ENCODE measurements at regions of chr2 and their contacts with region 1.

Region 1: GRCh38 chr2:163735685-163736432 is at the start of gene FIGN:
- DNase-seq: no peak
- ATAC-seq: peak; percentile 75
- H3K4me3 ChIP-seq: peak within 1 kb of the TSS; percentile 88 to 98
- H3K27ac ChIP-seq: peak within 1 kb of the TSS; percentile 99
- H3K4me1 ChIP-seq: peaks cover 26% of the 10 kb centered on the region
- H3K27me3 ChIP-seq: no peaks in the 10 kb centered on the region
- CTCF ChIP-seq: no peak
- total RNA-seq, gene FIGN: 19.5 TPM

Region 2: DNA sequence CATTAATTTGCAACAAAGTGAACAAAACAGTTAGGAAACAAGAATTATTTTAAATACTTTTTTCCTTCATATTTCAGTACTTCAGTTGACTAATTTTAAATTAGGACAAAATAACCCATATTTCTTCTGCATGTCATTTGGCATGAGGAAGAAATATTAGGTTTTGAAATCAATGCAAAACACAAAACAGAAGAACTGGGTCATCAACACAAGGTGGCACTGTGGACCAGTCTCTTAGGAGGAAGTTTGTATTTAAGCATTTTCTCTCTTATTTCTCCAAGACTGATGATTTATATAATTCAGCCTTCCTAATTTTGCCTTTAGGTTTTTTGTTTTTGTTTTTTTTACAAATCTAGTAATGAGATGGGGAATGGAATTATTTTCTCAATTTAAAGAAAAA is 544.5 kb before region 1 on chr2:
- CTCF ChIA-PET with region 1: no interaction called
- POLR2A ChIA-PET with region 1: interaction called, 3 read pairs
- in situ Hi-C with region 1: no loop called
- intact Hi-C with region 1: loop called (anchors 5 kb)
- DNase-seq: no peak
- ATAC-seq: no peak
- H3K4me3 ChIP-seq: no peak overlapping the region
- H3K27ac ChIP-seq: no peak overlapping the region; the same call in 1 of the 2 replicates
- H3K4me1 ChIP-seq: peaks cover 3% of the 10 kb centered on the region; the same call in 1 of the 2 replicates
- H3K27me3 ChIP-seq: no peaks in the 10 kb centered on the region
- CTCF ChIP-seq: peak; percentile 72; the same call in 1 of the 2 replicates

Region 3: GRCh38 chr2:163345908-163346573 is 389.8 kb before region 1 on chr2:
- CTCF ChIA-PET with region 1: no interaction called
- POLR2A ChIA-PET with region 1: interaction called, 14 read pairs
- in situ Hi-C with region 1: no loop called
- intact Hi-C with region 1: loop called (anchors 2 kb)
- DNase-seq: peak; percentile 81
- ATAC-seq: no peak
- H3K4me3 ChIP-seq: no peak overlapping the region
- H3K27ac ChIP-seq: peak overlapping the region; percentile 100
- H3K4me1 ChIP-seq: peaks cover 36% of the 10 kb centered on the region
- H3K27me3 ChIP-seq: no peaks in the 10 kb centered on the region
- CTCF ChIP-seq: peak; percentile 76; the same call in 1 of the 2 replicates

Region 4: DNA sequence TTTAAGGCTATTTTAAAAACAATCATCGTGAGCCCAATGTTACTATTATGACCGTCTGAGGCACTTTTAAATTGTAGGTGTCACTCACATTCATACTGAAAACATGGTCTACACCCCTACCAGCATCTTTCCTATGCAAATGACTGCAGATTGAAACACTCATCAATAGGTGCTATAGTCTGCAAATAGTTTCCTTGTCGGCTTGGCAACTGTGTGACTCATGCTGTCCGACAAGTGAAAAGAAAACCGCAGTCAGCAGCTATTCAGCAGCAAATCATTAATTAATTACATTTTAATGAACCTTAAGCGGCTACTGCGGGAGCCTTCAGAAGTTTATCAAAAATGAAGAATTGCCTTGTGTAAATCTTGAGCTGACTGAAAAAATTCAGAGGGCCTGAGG is 134.5 kb before region 1 on chr2:
- CTCF ChIA-PET with region 1: no interaction called
- POLR2A ChIA-PET with region 1: no interaction called
- in situ Hi-C with region 1: no loop called
- intact Hi-C with region 1: loop called (anchors 10 kb)
- DNase-seq: no peak
- ATAC-seq: peak; percentile 79; the same call in 1 of the 2 replicates
- H3K4me3 ChIP-seq: no peak overlapping the region
- H3K27ac ChIP-seq: peak overlapping the region; percentile 87
- H3K4me1 ChIP-seq: peaks cover 63% of the 10 kb centered on the region
- H3K27me3 ChIP-seq: no peaks in the 10 kb centered on the region
- CTCF ChIP-seq: no peak

Region 5: GRCh38 chr2:163686289-163686688 is 49.6 kb before region 1 on chr2:
- CTCF ChIA-PET with region 1: no interaction called
- POLR2A ChIA-PET with region 1: no interaction called
- in situ Hi-C with region 1: no loop called
- intact Hi-C with region 1: loop called (anchors 1 kb)
- DNase-seq: no peak
- ATAC-seq: no peak
- H3K4me3 ChIP-seq: no peak overlapping the region
- H3K27ac ChIP-seq: no peak overlapping the region
- H3K4me1 ChIP-seq: peaks cover 13% of the 10 kb centered on the region
- H3K27me3 ChIP-seq: no peaks in the 10 kb centered on the region
- CTCF ChIP-seq: no peak

Region 6: DNA sequence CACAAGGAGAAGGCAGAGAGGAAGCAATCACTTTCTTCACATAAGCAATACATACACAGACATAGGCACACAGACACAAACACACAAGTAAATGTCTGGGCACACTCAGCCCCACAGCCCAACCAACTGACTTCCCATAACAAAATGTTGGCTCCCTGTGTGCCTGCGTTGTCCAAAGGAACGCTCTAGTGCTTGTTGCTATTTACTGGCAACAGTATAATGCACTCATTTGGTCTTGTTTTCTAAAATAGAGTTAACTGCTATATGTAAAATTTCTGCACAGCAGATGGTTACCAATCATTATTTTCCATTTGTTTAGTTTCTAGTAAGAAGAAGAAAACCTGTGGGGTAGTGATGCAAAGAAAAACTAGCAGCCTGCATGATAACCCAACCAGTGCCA is 16.5 kb before region 1 on chr2:
- CTCF ChIA-PET with region 1: no interaction called
- POLR2A ChIA-PET with region 1: no interaction called
- in situ Hi-C with region 1: no loop called
- intact Hi-C with region 1: no loop called
- DNase-seq: no peak
- ATAC-seq: no peak
- H3K4me3 ChIP-seq: no peak overlapping the region
- H3K27ac ChIP-seq: no peak overlapping the region; the same call in 1 of the 2 replicates
- H3K4me1 ChIP-seq: peaks cover 37% of the 10 kb centered on the region
- H3K27me3 ChIP-seq: no peaks in the 10 kb centered on the region
- CTCF ChIP-seq: no peak

Region 7: DNA sequence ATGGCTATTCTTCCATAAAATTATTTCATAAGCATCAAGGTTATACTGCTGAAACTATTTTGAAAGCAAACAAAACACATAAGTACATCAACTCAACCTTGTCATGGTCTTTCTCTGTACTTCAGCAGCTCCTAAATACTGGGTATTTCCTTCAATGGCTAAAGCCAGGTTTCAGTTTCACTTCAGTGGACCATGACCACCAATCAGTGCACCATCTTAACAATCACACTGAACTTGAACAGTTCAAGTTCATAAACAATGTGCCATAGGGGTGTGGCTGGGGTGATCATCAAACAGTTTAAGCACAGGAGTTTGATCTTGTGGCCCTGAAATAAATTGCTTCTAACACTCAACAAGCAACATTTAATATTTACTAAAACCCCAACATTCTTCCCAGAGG is 124.1 kb after region 1 on chr2:
- CTCF ChIA-PET with region 1: no interaction called
- POLR2A ChIA-PET with region 1: no interaction called
- in situ Hi-C with region 1: no loop called
- intact Hi-C with region 1: no loop called
- DNase-seq: no peak
- ATAC-seq: peak; percentile 72
- H3K4me3 ChIP-seq: peak overlapping the region in 1 of 2 experiments; percentile 17; a peak in 1 of 4 replicates
- H3K27ac ChIP-seq: peak overlapping the region; percentile 57; the same call in 1 of the 2 replicates
- H3K4me1 ChIP-seq: no peaks in the 10 kb centered on the region
- H3K27me3 ChIP-seq: no peaks in the 10 kb centered on the region
- CTCF ChIP-seq: no peak

Region 8: GRCh38 chr2:164061129-164061746 is 325.4 kb after region 1 on chr2:
- CTCF ChIA-PET with region 1: interaction called, 3 read pairs
- POLR2A ChIA-PET with region 1: interaction called, 9 read pairs
- in situ Hi-C with region 1: no loop called
- intact Hi-C with region 1: loop called (anchors 5 kb)
- DNase-seq: peak; percentile 20
- ATAC-seq: no peak
- H3K4me3 ChIP-seq: no peak overlapping the region
- H3K27ac ChIP-seq: peak overlapping the region; percentile 3; the same call in 1 of the 2 replicates
- H3K4me1 ChIP-seq: no peaks in the 10 kb centered on the region
- H3K27me3 ChIP-seq: no peaks in the 10 kb centered on the region
- CTCF ChIP-seq: peak; percentile 65

Region 9: DNA sequence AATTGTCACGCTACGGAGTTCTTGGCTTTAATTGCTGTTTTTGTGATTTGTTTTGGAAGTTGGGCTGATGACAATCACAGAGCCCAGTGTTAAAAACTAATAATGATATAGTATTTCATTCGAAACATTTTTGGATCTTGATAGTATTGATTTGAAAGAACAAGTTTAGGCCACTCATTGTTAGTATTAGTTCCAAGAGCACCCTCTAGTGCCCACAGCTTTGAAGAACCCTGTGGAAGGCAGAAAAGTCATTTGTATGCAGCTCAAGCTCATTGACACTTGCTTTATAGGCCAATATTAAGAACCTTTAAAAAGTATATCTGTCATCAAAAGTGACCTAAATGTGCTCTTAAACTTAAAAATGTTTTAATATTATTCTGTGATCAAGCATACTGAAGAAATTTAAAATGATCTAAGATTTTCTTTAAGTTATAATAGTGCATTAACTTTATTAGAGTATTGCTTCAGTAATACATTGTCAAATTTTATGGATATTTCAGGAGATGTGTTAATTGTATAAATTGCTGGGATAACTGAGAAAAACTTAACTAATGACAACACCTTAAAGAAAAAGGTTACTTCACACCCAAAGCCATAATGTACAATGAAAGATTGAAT is 694.4 kb after region 1 on chr2:
- CTCF ChIA-PET with region 1: no interaction called
- POLR2A ChIA-PET with region 1: no interaction called
- in situ Hi-C with region 1: no loop called
- intact Hi-C with region 1: loop called (anchors 10 kb)
- DNase-seq: peak; percentile 25
- ATAC-seq: peak; percentile 83
- H3K4me3 ChIP-seq: no peak overlapping the region
- H3K27ac ChIP-seq: no peak overlapping the region
- H3K4me1 ChIP-seq: peaks cover 5% of the 10 kb centered on the region
- H3K27me3 ChIP-seq: no peaks in the 10 kb centered on the region
- CTCF ChIP-seq: peak; percentile 75; the same call in 1 of the 2 replicates